WTC11 (cell line): ENCODE measurements at regions of chr1 and their contacts with region 1.

Region 1: GRCh38 chr1:55021965-55022546 is 17.3 kb upstream of the PCSK9 start:
- DNase-seq: peak; percentile 96
- ATAC-seq: peak; percentile 100
- H3K4me3 Mint-ChIP-seq: no peak overlapping the region
- H3K27ac Mint-ChIP-seq: peak overlapping the region; percentile 82
- H3K4me1 Mint-ChIP-seq: peaks cover 44% of the 10 kb centered on the region
- H3K27me3 Mint-ChIP-seq: peaks cover 10% of the 10 kb centered on the region; the same call in 1 of the 2 replicates
- CTCF ChIP-seq: peak; percentile 88

Region 2: GRCh38 chr1:54886724-54887664 is 135.1 kb before region 1 on chr1 and contains the start of gene DHCR24:
- CTCF ChIA-PET with region 1: interaction called, 43 read pairs
- POLR2A ChIA-PET with region 1: no interaction called
- DNase-seq: peak; percentile 86
- ATAC-seq: peak; percentile 91
- H3K4me3 Mint-ChIP-seq: peak within 1 kb of the TSS; percentile 95
- H3K27ac Mint-ChIP-seq: peak within 1 kb of the TSS; percentile 93
- H3K4me1 Mint-ChIP-seq: peaks cover 47% of the 10 kb centered on the region
- H3K27me3 Mint-ChIP-seq: no peaks in the 10 kb centered on the region
- CTCF ChIP-seq: no peak
- total RNA-seq, gene DHCR24: 300 to 337 TPM (median 336 TPM) in 3 replicates

Region 3: DNA sequence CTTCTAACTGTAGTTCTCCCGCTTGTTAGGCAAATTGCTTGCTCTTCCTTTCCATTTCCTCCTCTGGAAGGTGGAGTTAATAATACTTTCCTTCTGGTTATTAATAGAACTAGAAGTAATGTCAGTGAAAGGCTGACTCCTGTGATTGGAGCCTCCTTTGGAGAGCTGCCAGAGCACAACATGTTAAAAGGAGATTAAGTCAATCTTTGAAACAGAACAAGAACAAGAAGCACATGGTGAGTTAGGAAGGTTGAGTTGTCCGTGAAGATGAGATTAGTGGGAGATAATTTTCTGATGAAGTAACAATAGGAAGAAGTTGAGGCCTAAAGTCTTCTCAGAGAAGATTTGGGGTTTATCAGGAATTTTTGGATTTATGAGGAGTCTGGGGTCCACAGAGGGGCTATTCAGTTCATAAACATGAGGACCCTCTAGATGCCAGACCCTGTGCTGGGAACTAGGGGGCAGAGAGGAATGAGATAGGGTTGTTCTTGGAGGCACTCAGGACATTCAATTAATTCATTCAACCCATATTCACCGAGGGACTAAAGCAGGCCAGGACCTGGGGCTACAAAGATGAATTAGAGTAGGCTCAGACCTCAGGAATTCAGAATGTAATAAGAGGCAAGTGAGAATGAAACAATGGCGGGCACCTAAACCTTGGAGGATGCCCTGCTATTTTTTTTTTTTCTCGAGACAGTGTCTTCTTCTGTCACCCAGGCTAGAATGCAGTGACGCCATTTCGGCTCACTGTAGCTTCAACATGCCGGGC is 94.4 kb before region 1 on chr1:
- CTCF ChIA-PET with region 1: interaction called, 14 read pairs
- POLR2A ChIA-PET with region 1: no interaction called
- DNase-seq: no peak
- ATAC-seq: no peak
- H3K4me3 Mint-ChIP-seq: no peak overlapping the region
- H3K27ac Mint-ChIP-seq: no peak overlapping the region
- H3K4me1 Mint-ChIP-seq: no peaks in the 10 kb centered on the region
- H3K27me3 Mint-ChIP-seq: peaks cover 14% of the 10 kb centered on the region
- CTCF ChIP-seq: no peak

Region 4: GRCh38 chr1:54950369-54951163 is 71.5 kb before region 1 on chr1:
- CTCF ChIA-PET with region 1: interaction called, 632 read pairs
- POLR2A ChIA-PET with region 1: interaction called, 8 read pairs
- DNase-seq: peak; percentile 84
- ATAC-seq: peak; percentile 86
- H3K4me3 Mint-ChIP-seq: peak overlapping the region; percentile 58
- H3K27ac Mint-ChIP-seq: no peak overlapping the region
- H3K4me1 Mint-ChIP-seq: peaks cover 21% of the 10 kb centered on the region
- H3K27me3 Mint-ChIP-seq: peaks cover 4% of the 10 kb centered on the region; the same call in 1 of the 2 replicates
- CTCF ChIP-seq: peak; percentile 69

Region 5: GRCh38 chr1:54980528-54981241 is 41.4 kb before region 1 on chr1 and contains the start of gene TMEM61:
- CTCF ChIA-PET with region 1: interaction called, 27 read pairs
- POLR2A ChIA-PET with region 1: no interaction called
- DNase-seq: peak; percentile 38
- ATAC-seq: peak; percentile 63
- H3K4me3 Mint-ChIP-seq: peak within 1 kb of the TSS; percentile 65
- H3K27ac Mint-ChIP-seq: no peak within 1 kb of the TSS
- H3K4me1 Mint-ChIP-seq: peaks cover 24% of the 10 kb centered on the region
- H3K27me3 Mint-ChIP-seq: peaks cover 31% of the 10 kb centered on the region
- CTCF ChIP-seq: no peak
- total RNA-seq, gene TMEM61: 0.41 to 0.74 TPM (median 0.44 TPM) in 3 replicates

Region 6: DNA sequence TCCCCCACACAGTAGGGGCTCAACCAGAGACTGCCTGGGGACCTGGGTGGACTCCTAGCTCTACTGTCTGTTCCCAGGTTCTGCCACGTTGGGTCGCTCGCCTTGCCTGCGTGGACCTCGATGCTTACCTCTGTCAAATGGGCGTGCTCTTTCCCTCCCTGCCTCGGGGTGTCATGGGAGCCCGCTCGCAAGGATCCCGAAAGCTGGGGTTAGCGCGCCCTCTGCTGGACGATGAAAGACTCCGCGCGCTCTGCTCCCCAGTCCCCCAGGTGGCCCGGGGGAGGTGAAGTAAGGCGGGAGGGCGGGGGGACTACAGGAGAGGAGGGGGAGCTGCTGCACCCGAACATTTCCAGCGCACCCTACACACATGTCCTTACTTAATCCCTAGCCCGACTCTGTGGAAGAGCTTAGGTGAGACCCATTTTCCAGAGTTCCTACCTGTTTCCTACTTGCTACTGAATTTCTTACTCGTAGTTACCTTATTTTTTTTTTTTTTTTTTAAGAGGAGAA is 25.6 kb before region 1 on chr1:
- CTCF ChIA-PET with region 1: interaction called, 174 read pairs
- POLR2A ChIA-PET with region 1: no interaction called
- DNase-seq: peak; percentile 91
- ATAC-seq: peak; percentile 57
- H3K4me3 Mint-ChIP-seq: peak overlapping the region; percentile 63
- H3K27ac Mint-ChIP-seq: no peak overlapping the region
- H3K4me1 Mint-ChIP-seq: peaks cover 42% of the 10 kb centered on the region
- H3K27me3 Mint-ChIP-seq: peaks cover 57% of the 10 kb centered on the region
- CTCF ChIP-seq: peak; percentile 86

Region 7: DNA sequence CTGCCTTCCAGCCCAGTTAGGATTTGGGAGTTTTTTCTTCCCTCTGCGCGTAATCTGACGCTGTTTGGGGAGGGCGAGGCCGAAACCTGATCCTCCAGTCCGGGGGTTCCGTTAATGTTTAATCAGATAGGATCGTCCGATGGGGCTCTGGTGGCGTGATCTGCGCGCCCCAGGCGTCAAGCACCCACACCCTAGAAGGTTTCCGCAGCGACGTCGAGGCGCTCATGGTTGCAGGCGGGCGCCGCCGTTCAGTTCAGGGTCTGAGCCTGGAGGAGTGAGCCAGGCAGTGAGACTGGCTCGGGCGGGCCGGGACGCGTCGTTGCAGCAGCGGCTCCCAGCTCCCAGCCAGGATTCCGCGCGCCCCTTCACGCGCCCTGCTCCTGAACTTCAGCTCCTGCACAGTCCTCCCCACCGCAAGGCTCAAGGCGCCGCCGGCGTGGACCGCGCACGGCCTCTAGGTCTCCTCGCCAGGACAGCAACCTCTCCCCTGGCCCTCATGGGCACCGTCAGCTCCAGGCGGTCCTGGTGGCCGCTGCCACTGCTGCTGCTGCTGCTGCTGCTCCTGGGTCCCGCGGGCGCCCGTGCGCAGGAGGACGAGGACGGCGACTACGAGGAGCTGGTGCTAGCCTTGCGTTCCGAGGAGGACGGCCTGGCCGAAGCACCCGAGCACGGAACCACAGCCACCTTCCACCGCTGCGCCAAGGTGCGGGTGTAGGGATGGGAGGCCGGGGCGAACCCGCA is 17.5 kb after region 1 on chr1 and contains the start of gene PCSK9:
- CTCF ChIA-PET with region 1: interaction called, 64 read pairs
- POLR2A ChIA-PET with region 1: interaction called, 3 read pairs
- DNase-seq: peak; percentile 71
- ATAC-seq: peak; percentile 68
- H3K4me3 Mint-ChIP-seq: peak within 1 kb of the TSS; percentile 86
- H3K27ac Mint-ChIP-seq: peak within 1 kb of the TSS; percentile 34; the same call in 1 of the 2 replicates
- H3K4me1 Mint-ChIP-seq: peaks cover 52% of the 10 kb centered on the region
- H3K27me3 Mint-ChIP-seq: peaks cover 52% of the 10 kb centered on the region
- CTCF ChIP-seq: no peak
- total RNA-seq, gene PCSK9: 47.9 to 73.2 TPM (median 49.3 TPM) in 3 replicates